ENCODE measurements at regions of chr5 and their contacts with region 1.

Region 1: GRCh38 chr5:177592010-177592834 is at the start of gene TMED9:
- DNase-seq: peak; percentile 98
- H3K4me3 Mint-ChIP-seq: peak within 1 kb of the TSS; percentile 97
- H3K27ac Mint-ChIP-seq: peak within 1 kb of the TSS; percentile 97
- H3K4me1 Mint-ChIP-seq: peaks cover 15% of the 10 kb centered on the region
- H3K27me3 Mint-ChIP-seq: peaks cover 24% of the 10 kb centered on the region
- total RNA-seq, gene TMED9: 147 and 156 TPM in 2 replicates

Region 2: DNA sequence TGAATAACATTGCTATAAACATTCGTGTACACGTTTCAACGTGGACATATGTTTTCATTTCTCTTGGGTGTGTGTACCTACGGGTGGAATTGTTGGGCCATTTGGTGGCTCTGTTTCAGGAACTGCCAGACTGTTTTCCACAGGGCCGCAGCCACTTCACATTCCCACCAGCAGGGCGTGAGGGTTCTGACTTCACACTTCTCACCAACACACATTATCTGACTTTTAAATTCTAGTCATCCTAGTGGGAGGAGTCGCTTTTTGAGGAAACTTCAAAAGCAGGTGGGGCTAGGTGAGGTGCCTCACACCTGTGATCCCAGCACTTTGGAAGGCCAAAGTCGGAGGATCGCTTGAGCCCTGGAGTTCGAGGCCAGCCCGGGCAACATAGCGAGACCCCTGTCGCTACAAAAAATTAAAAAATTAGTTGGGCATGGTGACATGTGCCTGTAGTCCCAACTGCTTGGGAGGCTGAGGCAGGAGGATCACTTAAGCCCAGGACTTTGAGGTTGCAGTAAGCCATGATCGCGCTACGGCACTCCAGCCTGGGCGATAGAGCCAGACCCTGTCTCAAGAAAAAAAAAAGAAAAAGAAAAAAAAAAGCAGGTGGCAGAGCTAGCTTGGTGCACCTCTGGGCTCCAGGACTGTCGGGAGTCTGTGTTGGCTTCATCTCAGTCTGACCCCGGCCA is 916.4 kb before region 1 on chr5:
- intact Hi-C with region 1: no loop called
- DNase-seq: no peak
- H3K4me3 Mint-ChIP-seq: no peak overlapping the region
- H3K27ac Mint-ChIP-seq: no peak overlapping the region
- H3K4me1 Mint-ChIP-seq: no peaks in the 10 kb centered on the region
- H3K27me3 Mint-ChIP-seq: peaks cover 24% of the 10 kb centered on the region

Region 3: DNA sequence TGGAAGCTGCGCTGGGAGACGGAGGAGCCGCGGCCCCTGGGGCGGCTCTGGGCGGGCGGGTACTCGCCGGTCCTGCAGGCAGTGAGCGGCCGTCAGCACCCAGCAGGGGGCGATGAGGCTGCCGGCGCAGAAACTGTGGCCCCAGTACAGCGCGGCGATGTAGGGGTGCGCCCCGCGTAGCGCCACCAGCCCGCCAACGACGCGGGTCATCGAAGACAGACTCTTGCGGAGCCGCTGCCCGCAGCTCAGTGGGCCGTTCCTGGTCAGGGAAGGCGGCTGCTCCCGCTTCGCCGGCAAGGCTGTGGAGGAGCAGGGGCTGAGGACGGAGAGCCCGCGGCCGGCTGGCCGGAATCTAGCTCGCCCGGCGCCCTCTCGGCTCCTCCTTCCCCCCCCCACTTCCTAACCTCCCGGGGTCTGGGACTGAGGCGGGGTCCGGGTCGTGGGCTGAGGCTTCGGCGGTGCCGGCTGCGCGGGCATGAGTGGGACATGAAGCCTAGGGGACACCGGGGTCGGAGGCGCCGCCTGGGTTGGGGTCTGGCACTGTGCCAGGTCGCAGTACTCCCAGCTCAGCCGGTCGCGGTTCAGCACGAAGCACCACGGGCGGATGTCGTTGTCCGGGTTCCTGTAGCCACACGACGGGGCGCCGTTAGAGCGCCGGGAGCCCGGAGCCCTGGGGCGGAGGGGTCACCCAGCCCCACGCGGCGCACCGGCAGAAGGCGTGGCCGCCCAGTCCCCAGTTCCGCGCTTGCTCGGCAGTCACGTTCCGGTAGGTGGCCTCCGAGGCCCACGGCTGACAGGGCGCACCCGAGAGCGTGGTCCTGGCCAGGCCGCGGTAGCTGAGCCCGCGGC is 188.2 kb before region 1 on chr5:
- intact Hi-C with region 1: loop called (anchors 10 kb)
- DNase-seq: peak; percentile 95
- H3K4me3 Mint-ChIP-seq: peak overlapping the region; percentile 88
- H3K27ac Mint-ChIP-seq: peak overlapping the region; percentile 67
- H3K4me1 Mint-ChIP-seq: peaks cover 17% of the 10 kb centered on the region
- H3K27me3 Mint-ChIP-seq: peaks cover 33% of the 10 kb centered on the region

Region 4: GRCh38 chr5:177554474-177555111 is 37.6 kb before region 1 on chr5 and contains the start of gene FAM193B:
- intact Hi-C with region 1: loop called (anchors 2 kb)
- DNase-seq: peak; percentile 99
- H3K4me3 Mint-ChIP-seq: peak within 1 kb of the TSS; percentile 88
- H3K27ac Mint-ChIP-seq: peak within 1 kb of the TSS; percentile 79
- H3K4me1 Mint-ChIP-seq: peaks cover 31% of the 10 kb centered on the region
- H3K27me3 Mint-ChIP-seq: no peaks in the 10 kb centered on the region
- total RNA-seq, gene FAM193B: 71.2 and 85.5 TPM in 2 replicates

Measured in activated CD4-positive, alpha-beta T cell treated with anti-CD3 and anti-CD28 coated beads, Interleukin-2, amount 10 ng/mL, durations not matched to agents 24 days and 14 days (primary cell).